AG04450 (cell line): ENCODE measurements at regions of chr10 and their contacts with region 1.

Region 1: DNA sequence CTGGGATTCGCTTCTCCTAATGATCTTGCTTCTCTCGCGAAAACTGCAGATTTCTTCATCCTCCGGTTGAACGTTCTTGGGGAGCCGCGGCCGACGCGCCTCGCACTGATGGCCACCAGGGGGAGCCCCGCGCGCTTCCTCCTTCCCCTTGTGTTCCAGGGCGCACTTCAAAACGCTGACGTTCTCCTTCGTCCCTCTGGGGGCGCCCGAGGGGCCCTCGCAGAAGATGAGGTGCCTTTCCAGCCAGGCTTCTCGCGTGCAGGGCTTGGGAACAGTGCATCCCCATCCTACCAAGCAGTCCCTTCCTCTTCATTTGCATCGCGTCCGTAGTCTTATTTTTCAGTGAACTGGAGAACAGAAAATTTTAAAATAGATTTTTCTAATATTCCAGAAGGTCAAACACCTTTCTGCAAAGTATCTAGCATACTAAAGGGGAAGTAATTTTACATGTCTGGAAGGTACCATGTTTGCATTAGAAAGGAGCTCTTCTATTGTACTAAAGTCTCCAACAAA is 22.5 kb downstream of the GSTO2 start:
- DNase-seq: no peak
- H3K4me3 ChIP-seq: no peak overlapping the region
- H3K27ac ChIP-seq: no peak overlapping the region
- H3K27me3 ChIP-seq: no peaks in the 10 kb centered on the region
- CTCF ChIP-seq: peak; percentile 100

Region 2: GRCh38 chr10:104262055-104262454 is 29.4 kb before region 1 on chr10:
- CTCF ChIA-PET with region 1: interaction called, 42 read pairs
- POLR2A ChIA-PET with region 1: no interaction called
- DNase-seq: no peak
- H3K4me3 ChIP-seq: no peak overlapping the region
- H3K27ac ChIP-seq: no peak overlapping the region
- H3K27me3 ChIP-seq: no peaks in the 10 kb centered on the region
- CTCF ChIP-seq: no peak

Region 3: GRCh38 chr10:104317195-104317767 is 25.8 kb after region 1 on chr10:
- CTCF ChIA-PET with region 1: interaction called, 49 read pairs
- POLR2A ChIA-PET with region 1: no interaction called
- DNase-seq: no peak
- H3K4me3 ChIP-seq: no peak overlapping the region
- H3K27ac ChIP-seq: peak overlapping the region; percentile 73
- H3K27me3 ChIP-seq: no peaks in the 10 kb centered on the region
- CTCF ChIP-seq: 0 out of 2 replicates have a peak, but pooled peaks have one; percentile 1

Region 4: DNA sequence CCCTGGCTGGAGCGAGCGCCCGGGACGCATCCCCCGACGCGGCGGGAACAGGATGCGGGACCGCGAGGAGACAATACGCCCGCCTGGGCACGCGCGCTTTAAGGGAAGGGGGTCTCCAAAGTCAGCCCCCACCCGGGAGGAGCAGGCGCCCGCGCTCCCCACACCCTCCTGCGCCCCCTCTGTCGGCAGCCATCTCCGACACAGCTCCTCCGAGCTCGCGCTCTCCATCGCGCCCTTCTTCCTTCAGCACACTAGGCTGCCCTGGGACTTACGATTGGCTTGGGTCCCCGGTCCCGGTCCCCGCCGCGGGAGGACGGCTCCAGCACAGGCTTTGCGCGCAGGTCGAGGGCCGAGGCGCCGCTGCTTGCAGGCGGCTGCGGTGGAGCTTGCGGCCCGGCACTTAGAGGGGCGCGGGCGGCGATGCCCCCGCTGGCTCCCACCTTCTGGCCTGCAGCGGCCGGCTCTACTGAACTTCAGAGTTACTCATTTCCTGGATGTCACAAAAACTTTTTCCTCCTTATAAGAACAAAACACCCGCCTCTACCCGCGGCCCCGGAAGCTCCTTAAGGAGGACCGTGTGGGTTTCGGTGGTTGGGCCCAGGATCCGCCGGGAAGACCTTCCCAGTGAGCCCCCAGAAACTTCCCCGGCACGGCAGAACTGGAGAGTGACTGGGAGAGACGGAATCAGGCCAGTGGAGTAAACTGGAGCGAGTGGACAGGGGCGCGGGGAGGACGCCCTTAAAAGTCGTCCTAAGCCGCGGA is 46.7 kb after region 1 on chr10 and contains the start of gene ITPRIP:
- CTCF ChIA-PET with region 1: interaction called, 99 read pairs
- POLR2A ChIA-PET with region 1: no interaction called
- DNase-seq: no peak
- H3K4me3 ChIP-seq: peak within 1 kb of the TSS; percentile 87
- H3K27ac ChIP-seq: peak within 1 kb of the TSS; percentile 99
- H3K27me3 ChIP-seq: no peaks in the 10 kb centered on the region
- CTCF ChIP-seq: peak; percentile 36
- polyA plus RNA-seq, gene ITPRIP: 18.8 and 22.9 TPM in 2 replicates

Region 5: DNA sequence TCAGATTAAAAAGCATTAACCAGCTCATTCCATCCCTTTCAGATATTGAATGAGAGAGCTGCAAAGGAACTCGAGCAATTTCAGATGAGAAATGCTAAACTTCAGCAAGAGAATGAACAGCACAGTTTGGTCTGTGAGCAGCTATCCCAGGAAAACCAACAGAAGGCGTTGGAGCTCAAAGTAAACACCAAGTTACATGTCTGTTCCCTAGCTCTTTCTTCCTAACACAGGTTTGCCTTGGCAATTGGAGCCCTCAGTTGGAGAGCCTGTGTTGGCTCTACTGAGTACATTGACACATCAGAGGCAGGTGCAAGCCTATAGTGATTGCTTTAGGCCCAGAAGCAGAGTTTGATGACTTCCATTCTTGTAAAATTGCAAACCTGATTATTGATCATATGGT is 76.9 kb after region 1 on chr10:
- CTCF ChIA-PET with region 1: interaction called, 17 read pairs
- POLR2A ChIA-PET with region 1: no interaction called
- DNase-seq: no peak
- H3K4me3 ChIP-seq: no peak overlapping the region
- H3K27ac ChIP-seq: no peak overlapping the region
- H3K27me3 ChIP-seq: peaks cover 3% of the 10 kb centered on the region
- CTCF ChIP-seq: no peak

Region 6: GRCh38 chr10:104501864-104502579 is 210.5 kb after region 1 on chr10:
- CTCF ChIA-PET with region 1: no interaction called
- POLR2A ChIA-PET with region 1: no interaction called
- DNase-seq: no peak
- H3K4me3 ChIP-seq: no peak overlapping the region
- H3K27ac ChIP-seq: no peak overlapping the region
- H3K27me3 ChIP-seq: no peaks in the 10 kb centered on the region
- CTCF ChIP-seq: no peak